ENCODE measurements at regions of chr19 and their contacts with region 1.

Region 1: DNA sequence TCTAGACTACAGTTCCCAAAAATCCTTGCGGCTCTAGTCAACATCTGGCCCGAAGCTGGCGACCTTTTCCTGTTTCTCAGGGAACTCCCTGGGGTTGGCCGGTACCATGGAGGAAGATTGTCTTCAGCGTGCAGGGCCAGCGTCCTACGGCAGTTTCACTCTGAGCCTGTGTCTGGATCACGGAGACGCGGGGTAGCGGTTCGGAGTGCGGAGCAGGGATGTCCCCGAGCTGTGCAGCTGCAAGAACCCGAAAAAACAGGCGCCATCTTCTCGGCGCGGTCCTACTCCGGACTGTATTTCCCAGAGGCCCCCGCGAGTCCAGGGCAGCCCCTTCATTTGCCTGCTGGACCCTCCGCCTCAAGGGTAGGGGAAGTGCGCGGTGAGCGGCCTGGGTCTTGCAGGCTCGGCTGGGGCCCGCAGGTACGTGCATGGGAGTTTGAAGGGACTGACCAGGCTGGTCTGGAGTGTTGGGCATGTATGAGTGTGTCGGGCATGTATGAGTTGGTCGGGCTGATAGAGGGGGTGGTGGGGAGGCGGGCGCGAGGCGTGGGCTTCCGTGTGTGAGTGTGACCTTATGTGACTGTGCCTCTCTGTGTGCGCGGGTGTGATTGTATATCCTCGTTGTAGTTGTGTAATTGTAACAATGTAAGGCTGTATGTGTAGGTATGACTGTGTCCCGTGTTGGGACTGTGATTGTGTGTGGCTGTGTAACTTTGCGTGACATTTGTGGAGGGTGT is at the start of gene ZNF383:
- DNase-seq: peak; percentile 92
- H3K4me3 ChIP-seq: peak within 1 kb of the TSS; percentile 51 to 89 (median 56)
- H3K27ac ChIP-seq: peak within 1 kb of the TSS; percentile 39
- H3K4me1 ChIP-seq: peaks cover 5% of the 10 kb centered on the region
- H3K27me3 ChIP-seq: no peaks in the 10 kb centered on the region
- CTCF ChIP-seq: no peak
- POLR2A ChIP-seq: peak; percentile 58
- total RNA-seq, gene ZNF383: 4.9 and 7.1 TPM in 2 replicates

Region 2: DNA sequence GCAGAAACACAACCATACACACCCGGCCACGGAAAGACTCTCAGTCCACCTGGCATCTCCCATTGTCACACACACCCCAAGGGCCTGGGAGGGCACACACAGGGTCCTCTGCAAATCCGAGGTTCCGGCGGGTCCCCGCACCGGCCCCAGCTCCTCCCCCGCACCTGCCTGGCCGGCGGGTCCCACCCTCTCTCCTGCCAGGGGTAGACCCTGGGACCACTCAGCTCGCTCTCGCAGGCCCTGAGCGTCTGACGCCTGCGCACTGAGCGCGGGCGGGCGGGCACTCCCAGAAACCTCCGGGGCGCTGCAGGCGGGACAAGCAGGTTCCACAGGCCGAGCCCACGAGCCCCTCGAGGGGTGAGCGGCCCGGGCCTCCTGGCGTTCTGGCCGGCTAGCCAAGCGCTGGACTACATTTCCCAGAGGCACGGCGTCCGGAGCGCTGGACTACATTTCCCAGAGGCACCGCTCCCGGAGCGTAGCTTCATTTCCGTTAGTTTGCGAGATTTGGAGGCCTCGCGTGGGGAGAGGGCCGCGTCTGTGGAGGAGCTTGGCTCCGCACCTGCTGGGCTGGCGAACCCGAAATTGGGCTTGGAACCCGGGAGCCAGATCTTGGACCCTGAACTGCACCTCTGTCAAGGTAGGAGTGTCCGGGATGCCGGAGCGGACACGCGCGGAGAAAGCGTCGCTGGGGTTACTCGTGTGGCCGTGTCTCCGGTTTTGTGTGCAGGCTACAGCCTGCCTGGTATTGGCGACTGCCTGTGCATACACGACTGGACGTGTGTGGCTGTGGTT is 139.9 kb before region 1 on chr19 and contains the start of gene ZNF420:
- CTCF ChIA-PET with region 1: no interaction called
- POLR2A ChIA-PET with region 1: no interaction called
- dilution Hi-C with region 1: no loop called
- intact Hi-C with region 1: loop called (anchors 5 kb)
- DNase-seq: peak; percentile 94
- H3K4me3 ChIP-seq: peak within 1 kb of the TSS; percentile 66 to 80 (median 77)
- H3K27ac ChIP-seq: peak within 1 kb of the TSS; percentile 28
- H3K4me1 ChIP-seq: peaks cover 9% of the 10 kb centered on the region
- H3K27me3 ChIP-seq: no peaks in the 10 kb centered on the region
- CTCF ChIP-seq: no peak
- POLR2A ChIP-seq: peak; percentile 64
- total RNA-seq, gene ZNF420: 4.2 and 5.3 TPM in 2 replicates

Region 3: DNA sequence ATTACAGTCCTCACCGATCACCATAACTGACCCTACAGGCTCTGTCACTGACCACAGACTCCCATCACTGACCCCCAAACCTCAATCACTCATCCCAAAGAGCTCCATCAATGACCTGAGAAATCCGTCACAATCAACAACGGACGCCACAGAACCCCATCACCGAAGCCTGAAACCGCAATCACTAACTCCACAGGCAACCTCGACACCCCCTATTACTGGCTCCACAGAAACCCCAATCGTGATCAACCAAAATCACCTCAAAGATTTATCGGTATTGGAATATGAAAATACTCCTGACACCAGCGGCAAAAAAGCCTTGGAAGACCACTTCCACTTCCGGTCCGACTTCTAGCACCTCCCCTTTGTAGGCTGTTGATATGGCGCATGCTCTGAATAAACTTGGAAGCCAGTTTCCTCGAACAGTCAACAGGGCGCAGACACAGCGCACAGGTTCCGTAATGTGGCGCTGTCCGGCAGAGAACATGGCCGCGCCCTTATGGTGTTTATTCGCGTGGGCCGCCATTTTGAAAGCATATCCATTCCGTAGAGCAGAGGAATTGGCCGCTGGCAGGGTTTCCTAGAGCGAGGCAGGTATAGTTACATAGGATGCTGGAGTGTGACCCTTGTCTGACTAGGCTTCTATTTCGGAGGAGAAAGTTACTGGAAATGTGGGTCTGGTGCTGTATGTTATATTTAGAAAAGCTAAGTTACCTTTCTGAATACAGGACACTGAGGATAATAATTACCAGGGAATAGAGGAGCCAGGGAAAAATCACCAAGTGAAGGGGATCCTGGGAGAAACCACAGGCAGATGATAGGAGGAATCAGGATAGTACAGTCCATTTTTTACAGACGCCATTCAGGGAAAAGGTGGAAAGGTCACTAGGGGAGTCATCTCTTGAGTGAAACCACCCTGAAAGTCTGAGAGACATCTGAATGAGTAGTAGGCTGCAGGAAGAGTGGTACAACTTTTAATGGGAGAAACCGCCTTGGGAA is 45.4 kb before region 1 on chr19 and contains the start of gene ZNF585A:
- CTCF ChIA-PET with region 1: interaction called, 5 read pairs
- POLR2A ChIA-PET with region 1: no interaction called
- dilution Hi-C with region 1: no loop called
- intact Hi-C with region 1: loop called (anchors 1 kb)
- DNase-seq: peak; percentile 97
- H3K4me3 ChIP-seq: peak within 1 kb of the TSS; percentile 49 to 95 (median 81)
- H3K27ac ChIP-seq: no peak within 1 kb of the TSS
- H3K4me1 ChIP-seq: peaks cover 3% of the 10 kb centered on the region
- H3K27me3 ChIP-seq: no peaks in the 10 kb centered on the region
- CTCF ChIP-seq: peak in 1 of 2 donors; percentile 24
- POLR2A ChIP-seq: peak; percentile 60
- total RNA-seq, gene ZNF585A: 6.0 and 6.7 TPM in 2 replicates

Region 4: GRCh38 chr19:37243206-37243632 is 25.2 kb after region 1 on chr19:
- CTCF ChIA-PET with region 1: no interaction called
- POLR2A ChIA-PET with region 1: no interaction called
- dilution Hi-C with region 1: no loop called
- intact Hi-C with region 1: no loop called
- DNase-seq: no peak
- H3K4me3 ChIP-seq: no peak overlapping the region
- H3K27ac ChIP-seq: no peak overlapping the region
- H3K4me1 ChIP-seq: no peaks in the 10 kb centered on the region
- H3K27me3 ChIP-seq: no peaks in the 10 kb centered on the region
- CTCF ChIP-seq: no peak
- POLR2A ChIP-seq: no peak

Region 5: DNA sequence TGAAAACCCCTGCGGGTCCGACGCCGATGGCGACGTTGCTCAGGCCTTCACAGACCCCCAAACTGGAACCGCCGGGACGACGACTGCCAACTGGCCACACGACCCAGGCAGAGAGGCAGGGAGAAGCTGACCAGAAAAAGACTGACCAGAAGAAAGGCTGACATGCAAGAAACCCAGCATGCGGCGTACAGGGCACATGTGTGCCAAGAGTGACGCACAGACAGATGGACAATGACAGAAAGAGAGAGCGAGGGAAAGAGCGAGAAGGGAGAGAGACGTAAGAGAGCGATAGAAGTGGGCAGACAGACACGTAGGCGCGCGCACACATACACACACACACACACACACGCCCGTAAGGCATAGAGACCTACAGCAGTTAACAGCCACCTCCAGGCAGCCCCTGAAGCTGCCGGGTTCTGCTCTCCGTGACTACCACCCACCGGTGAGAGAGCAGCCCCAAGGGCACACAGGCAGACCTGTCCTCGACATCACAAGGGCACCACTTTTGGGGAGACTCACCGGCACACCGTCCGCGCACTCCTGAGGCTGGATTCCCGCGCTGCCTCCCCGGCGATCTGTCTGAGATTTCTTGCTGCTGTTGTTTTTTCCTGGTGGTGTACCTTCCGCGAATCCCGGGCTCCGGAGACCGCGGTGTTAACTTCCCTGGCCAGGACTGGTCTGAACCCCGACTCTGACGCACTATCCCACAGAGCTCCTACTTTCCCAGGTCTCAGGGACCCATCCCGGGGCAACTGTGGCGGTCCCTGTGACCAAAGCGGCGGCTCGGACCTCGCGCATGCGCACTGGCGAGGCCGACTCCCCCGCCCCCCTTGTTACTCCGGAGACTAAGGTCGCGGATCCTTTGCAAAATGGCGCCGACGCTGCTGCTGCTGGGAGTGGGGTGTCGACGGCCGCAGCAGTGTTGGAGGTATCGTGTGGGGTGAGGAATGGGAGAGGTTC is 85.8 kb after region 1 on chr19:
- CTCF ChIA-PET with region 1: no interaction called
- POLR2A ChIA-PET with region 1: no interaction called
- dilution Hi-C with region 1: no loop called
- intact Hi-C with region 1: no loop called
- DNase-seq: no peak
- H3K4me3 ChIP-seq: peak overlapping the region in 1 of 3 experiments; percentile 30
- H3K27ac ChIP-seq: no peak overlapping the region
- H3K4me1 ChIP-seq: no peaks in the 10 kb centered on the region
- H3K27me3 ChIP-seq: no peaks in the 10 kb centered on the region
- CTCF ChIP-seq: no peak
- POLR2A ChIP-seq: no peak

Region 6: DNA sequence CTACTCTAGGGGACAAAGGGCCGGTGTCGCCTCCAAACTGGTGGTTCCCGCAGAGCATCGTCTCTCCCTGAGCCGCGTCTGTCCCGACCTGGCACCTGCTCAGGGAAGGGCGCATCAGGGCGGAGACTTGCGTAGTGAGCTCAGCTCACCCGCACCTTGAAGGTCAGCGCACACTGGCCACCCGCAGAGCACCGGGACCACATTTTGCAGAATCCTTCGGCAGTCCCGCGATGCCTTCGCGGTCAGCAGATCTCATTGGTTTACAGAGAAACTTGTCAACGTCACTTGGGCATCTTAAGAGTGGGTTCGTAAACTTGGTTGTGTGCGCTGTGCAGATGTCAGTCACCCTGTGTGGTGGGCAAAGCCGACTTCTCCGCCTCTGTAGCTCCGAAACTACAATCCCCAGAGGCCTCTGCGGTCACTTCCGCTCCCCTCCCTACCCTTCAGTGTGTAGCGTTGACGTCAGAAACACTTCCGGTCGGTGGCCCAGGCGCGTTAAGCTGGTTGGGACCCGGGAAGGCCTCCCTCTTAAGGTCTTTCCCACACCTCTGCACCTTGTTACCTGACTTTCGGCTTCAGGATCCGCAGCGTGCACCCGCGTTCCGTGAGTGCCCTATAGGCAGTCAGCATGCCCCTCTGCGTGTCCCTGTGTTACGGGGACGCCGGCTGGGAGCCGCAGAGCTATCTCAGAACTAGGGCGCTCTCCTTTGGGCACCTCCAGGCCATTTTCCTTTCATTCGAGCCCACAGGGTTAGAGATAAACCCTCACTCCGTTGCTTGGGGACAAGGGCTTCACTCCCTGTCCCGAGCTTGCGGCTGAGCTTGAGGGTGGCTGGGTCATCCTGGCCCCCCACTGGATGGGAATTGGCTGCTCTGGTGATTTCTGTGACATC is 116.4 kb after region 1 on chr19:
- CTCF ChIA-PET with region 1: interaction called, 4 read pairs
- POLR2A ChIA-PET with region 1: no interaction called
- dilution Hi-C with region 1: no loop called
- intact Hi-C with region 1: loop called (anchors 10 kb)
- DNase-seq: peak; percentile 94
- H3K4me3 ChIP-seq: peak overlapping the region; percentile 65 to 83 (median 78)
- H3K27ac ChIP-seq: peak overlapping the region; percentile 74
- H3K4me1 ChIP-seq: peaks cover 19% of the 10 kb centered on the region
- H3K27me3 ChIP-seq: no peaks in the 10 kb centered on the region
- CTCF ChIP-seq: no peak
- POLR2A ChIP-seq: peak; percentile 66

Region 7: DNA sequence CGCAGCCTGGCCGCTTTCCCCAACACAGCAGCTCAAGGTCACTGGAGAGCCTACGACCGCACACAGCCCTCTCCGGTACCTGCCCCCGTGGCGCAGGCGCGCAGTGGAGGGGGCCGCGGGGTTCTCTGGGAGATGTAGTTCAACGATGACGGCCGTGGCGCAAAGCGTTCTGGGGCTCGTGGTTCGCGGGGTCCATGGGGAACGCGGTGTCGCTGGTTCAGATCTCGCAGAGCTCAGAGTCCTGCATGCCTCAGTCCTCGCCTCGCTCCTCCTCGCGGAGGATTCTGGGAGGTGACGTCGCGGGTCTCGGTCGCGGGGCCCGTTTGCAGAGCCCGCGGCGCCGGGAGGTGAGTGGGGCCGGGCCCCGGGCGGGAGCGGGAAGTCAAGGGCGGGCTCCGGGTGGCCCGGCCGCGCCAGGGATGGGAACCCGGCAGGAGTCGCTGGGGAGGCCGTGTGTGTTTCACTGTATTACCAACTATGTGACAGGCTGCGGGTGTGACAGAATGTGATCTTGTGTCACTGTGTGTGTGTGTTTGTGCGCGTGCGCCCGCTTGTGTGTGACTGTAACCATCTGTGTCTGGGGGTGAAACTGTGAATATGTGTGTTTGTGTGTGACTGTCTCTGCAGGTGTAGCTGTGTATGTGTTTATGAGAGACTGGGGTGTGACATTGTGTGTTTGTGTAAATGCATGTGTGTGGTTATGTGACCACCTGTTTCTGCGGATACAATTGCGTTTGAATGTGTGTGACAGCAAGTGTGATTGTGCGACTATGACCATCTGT is 153.0 kb after region 1 on chr19 and contains the start of gene ZNF527:
- CTCF ChIA-PET with region 1: no interaction called
- POLR2A ChIA-PET with region 1: no interaction called
- dilution Hi-C with region 1: no loop called
- intact Hi-C with region 1: loop called (anchors 2 kb)
- DNase-seq: peak; percentile 98
- H3K4me3 ChIP-seq: peak within 1 kb of the TSS; percentile 13 to 89 (median 72)
- H3K27ac ChIP-seq: peak within 1 kb of the TSS; percentile 14
- H3K4me1 ChIP-seq: no peaks in the 10 kb centered on the region
- H3K27me3 ChIP-seq: no peaks in the 10 kb centered on the region
- CTCF ChIP-seq: no peak
- POLR2A ChIP-seq: peak; percentile 74
- total RNA-seq, gene ZNF527: 3.4 and 3.6 TPM in 2 replicates

Measured in endothelial cell of umbilical vein (primary cell).